ENCODE measurements at regions of chr5 and their contacts with region 1.

Region 1: GRCh38 chr5:173917788-173918786 is 29.9 kb downstream of the CPEB4 start:
- DNase-seq: peak; percentile 93
- H3K4me3 ChIP-seq: peak overlapping the region; percentile 72
- H3K27ac ChIP-seq: peak overlapping the region; percentile 88
- H3K4me1 ChIP-seq: peaks cover 91% of the 10 kb centered on the region
- CTCF ChIP-seq: peak; percentile 69

Region 2: GRCh38 chr5:173697931-173698579 is 220.0 kb before region 1 on chr5:
- CTCF ChIA-PET with region 1: interaction called, 4 read pairs
- POLR2A ChIA-PET with region 1: interaction called, 12 read pairs
- intact Hi-C with region 1: loop called (anchors 5 kb)
- DNase-seq: peak; percentile 83
- H3K4me3 ChIP-seq: peak overlapping the region; percentile 46
- H3K27ac ChIP-seq: peak overlapping the region; percentile 80
- H3K4me1 ChIP-seq: peaks cover 68% of the 10 kb centered on the region
- CTCF ChIP-seq: no peak

Region 3: DNA sequence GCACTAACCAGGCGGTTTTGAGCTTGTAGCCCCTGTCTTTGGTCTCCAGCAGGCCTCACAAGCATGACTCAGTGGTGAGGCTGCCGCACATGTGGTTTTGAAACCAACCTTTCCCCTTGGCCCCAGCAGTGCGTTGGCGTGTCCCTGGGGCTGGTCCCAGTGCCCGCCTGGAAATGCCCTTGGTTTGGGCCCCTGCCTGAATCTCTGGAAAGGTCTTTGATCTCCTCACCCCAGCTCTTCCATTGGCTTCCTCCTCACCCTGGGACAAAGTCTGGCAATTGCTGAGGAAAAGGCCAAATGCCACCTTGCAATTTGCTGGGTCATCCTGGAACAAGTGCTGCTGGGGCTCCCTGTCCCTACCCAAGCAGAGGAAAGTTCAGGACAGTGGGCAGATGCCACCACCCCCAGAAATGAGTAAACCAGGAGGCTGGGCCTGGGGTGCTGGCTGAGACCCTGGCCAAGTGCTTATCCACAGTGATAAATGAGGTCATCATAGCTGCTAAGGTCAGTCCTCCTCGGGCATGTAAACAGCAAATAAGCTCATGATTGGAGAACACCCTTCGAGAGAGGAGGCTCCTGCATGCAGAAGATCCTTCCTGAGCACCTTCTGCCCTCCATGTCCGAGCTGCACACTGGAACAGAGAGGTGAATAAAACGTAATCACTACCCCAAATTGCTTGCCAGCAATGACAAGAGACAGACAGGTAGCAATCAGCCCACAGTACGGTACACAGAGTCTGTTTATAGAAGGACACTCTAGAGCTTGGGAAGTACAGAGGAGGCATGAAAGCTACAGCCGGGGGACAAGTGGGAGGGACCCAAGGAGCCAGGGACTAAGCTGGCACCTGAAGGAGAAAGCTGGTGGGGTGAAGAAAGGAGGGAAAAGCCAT is 128.8 kb before region 1 on chr5:
- CTCF ChIA-PET with region 1: interaction called, 5 read pairs
- POLR2A ChIA-PET with region 1: interaction called, 4 read pairs
- intact Hi-C with region 1: loop called (anchors 2 kb)
- DNase-seq: peak; percentile 31
- H3K4me3 ChIP-seq: no peak overlapping the region
- H3K27ac ChIP-seq: no peak overlapping the region
- H3K4me1 ChIP-seq: peaks cover 63% of the 10 kb centered on the region
- CTCF ChIP-seq: no peak

Region 4: GRCh38 chr5:173823711-173824528 is 94.2 kb before region 1 on chr5:
- CTCF ChIA-PET with region 1: interaction called, 3 read pairs
- POLR2A ChIA-PET with region 1: interaction called, 7 read pairs
- intact Hi-C with region 1: loop called (anchors 1 kb)
- DNase-seq: no peak
- H3K4me3 ChIP-seq: peak overlapping the region; percentile 27
- H3K27ac ChIP-seq: peak overlapping the region; percentile 99
- H3K4me1 ChIP-seq: peaks cover 84% of the 10 kb centered on the region
- CTCF ChIP-seq: no peak

Region 5: DNA sequence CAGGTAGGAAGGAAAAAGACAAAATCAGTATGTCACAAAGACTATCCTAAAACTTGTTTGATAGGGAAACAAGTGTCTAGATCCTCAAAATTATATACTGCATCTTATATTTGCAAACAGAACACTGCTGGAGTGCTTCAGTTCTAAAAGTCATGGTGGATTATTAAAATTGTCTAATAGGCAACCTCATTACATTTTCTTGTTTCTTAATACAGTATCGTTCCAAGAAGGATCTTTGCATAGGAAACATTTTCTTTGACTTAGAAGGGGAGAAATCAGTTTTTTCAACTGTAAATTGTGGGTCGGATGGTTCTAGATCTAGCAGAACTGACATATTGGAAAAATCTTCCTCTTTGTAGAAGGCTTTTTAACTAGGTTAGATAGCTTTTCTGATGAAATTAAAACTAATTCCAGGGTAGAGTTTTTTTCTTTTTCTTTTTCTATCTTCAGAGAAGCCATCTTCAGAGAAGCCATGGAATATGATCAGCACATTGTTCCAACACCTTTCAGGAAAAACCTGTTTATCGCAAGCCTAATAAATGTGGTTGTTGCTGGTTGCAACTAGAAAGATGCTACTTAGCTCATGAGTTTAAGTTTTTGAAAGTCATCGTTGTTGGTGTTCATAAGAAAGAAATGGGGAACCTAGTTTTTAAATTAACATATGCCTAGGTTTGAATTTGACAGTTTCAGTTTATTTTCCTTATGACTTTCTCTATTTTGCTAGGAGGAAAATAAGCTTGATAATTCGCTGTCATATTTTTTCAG is 22.5 kb before region 1 on chr5:
- CTCF ChIA-PET with region 1: interaction called, 3 read pairs
- POLR2A ChIA-PET with region 1: interaction called, 114 read pairs
- intact Hi-C with region 1: loop called (anchors 2 kb)
- DNase-seq: no peak
- H3K4me3 ChIP-seq: peak overlapping the region; percentile 88
- H3K27ac ChIP-seq: peak overlapping the region; percentile 88
- H3K4me1 ChIP-seq: peaks cover 55% of the 10 kb centered on the region
- CTCF ChIP-seq: no peak

Region 6: DNA sequence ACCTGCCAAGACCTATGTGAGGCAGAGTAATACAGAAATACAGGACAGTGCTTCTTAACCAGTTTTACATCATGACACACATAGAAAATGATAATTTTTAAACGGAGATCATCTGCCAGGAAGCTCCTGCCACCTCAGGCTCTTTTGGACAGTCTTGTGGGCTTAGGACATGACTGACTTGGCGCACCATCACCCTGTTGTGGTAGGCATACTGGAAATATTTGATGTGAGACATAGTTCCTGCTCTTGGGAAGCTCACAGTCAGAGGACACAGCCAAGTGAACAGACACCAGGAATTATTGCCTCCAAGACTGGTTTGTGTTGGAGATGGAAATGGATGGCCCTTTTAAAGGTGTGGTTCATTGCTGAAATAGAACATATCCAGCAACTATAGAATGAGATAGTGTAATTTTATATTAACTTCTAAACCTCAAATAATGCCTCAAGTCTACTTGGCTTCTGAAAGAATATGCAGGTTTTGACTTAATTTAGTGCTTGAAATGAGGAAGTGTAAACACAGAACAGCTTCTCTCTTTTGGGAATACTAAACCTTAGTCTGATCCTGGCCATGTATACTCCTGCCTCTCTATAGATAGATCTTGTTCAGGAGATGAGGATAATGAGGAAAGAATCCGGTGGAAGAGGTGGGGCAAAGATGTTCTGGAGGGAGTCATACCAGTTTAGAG is 10.3 kb before region 1 on chr5:
- CTCF ChIA-PET with region 1: interaction called, 3 read pairs
- POLR2A ChIA-PET with region 1: interaction called, 114 read pairs
- intact Hi-C with region 1: no loop called
- DNase-seq: no peak
- H3K4me3 ChIP-seq: peak overlapping the region; percentile 50
- H3K27ac ChIP-seq: peak overlapping the region; percentile 75
- H3K4me1 ChIP-seq: peaks cover 86% of the 10 kb centered on the region
- CTCF ChIP-seq: no peak

Region 7: GRCh38 chr5:174271337-174271736 is 353.2 kb after region 1 on chr5:
- CTCF ChIA-PET with region 1: no interaction called
- POLR2A ChIA-PET with region 1: no interaction called
- intact Hi-C with region 1: no loop called
- DNase-seq: no peak
- H3K4me3 ChIP-seq: no peak overlapping the region
- H3K27ac ChIP-seq: no peak overlapping the region
- H3K4me1 ChIP-seq: no peaks in the 10 kb centered on the region
- CTCF ChIP-seq: no peak

Measured in OCI-LY7 (cell line).